ENCODE measurements at regions of chr3 and their contacts with region 1.

Region 1: GRCh38 chr3:4633078-4634004 is 140.2 kb downstream of the ITPR1 start:
- DNase-seq: no peak
- H3K4me3 Mint-ChIP-seq: no peak overlapping the region
- H3K27ac Mint-ChIP-seq: no peak overlapping the region
- H3K4me1 Mint-ChIP-seq: peaks cover 5% of the 10 kb centered on the region
- H3K27me3 Mint-ChIP-seq: no peaks in the 10 kb centered on the region

Region 2: DNA sequence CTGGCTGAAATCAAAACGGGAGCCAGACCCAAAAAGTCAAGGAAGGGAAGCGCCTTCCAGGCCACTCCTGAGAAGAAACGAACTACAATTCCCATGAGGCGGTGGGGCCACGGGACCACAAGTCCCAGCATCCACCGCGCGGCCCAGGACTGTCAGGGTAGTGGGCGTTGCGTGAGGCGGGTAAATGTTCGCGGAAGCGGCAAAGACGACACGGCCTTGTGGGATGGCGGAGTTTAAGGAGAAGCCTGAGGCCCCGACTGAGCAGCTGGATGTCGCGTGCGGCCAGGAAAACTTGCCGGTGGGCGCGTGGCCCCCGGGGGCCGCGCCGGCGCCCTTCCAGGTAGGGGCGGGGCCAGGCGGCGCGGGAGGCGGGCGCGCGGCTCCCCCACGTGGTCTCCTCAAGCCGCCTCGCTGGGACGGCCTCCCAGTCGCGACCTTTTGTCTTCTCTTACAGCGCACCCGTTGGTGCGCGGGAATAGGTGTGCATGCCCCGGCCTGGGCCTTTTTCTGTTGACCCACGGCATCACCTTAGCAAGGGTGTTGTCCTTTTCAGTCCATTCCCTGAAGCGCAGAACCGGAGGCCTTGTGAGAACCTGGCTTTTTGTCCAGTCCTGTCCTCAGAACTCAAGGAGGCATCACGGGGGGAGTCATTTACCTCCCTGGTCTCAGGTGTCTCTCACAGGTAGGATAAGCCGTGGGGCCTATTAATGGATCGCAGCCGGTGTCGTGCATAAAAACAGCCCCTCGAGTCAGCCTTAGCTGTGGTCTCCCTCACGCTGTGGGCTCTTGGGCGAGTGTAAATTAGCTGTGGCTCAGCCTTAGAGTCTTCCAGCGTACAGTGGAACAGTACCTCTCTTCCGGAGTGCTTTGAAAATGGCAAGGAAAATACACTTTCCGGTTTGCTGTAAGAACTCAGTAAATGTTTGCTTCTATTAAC is 329.9 kb before region 1 on chr3 and contains the start of gene SETMAR:
- CTCF ChIA-PET with region 1: interaction called, 6 read pairs
- POLR2A ChIA-PET with region 1: no interaction called
- intact Hi-C with region 1: loop called (anchors 5 kb)
- DNase-seq: peak; percentile 91
- H3K4me3 Mint-ChIP-seq: peak within 1 kb of the TSS; percentile 93
- H3K27ac Mint-ChIP-seq: peak within 1 kb of the TSS; percentile 96
- H3K4me1 Mint-ChIP-seq: peaks cover 23% of the 10 kb centered on the region
- H3K27me3 Mint-ChIP-seq: no peaks in the 10 kb centered on the region
- total RNA-seq, gene SETMAR: 11.7 to 13.8 TPM

Region 3: DNA sequence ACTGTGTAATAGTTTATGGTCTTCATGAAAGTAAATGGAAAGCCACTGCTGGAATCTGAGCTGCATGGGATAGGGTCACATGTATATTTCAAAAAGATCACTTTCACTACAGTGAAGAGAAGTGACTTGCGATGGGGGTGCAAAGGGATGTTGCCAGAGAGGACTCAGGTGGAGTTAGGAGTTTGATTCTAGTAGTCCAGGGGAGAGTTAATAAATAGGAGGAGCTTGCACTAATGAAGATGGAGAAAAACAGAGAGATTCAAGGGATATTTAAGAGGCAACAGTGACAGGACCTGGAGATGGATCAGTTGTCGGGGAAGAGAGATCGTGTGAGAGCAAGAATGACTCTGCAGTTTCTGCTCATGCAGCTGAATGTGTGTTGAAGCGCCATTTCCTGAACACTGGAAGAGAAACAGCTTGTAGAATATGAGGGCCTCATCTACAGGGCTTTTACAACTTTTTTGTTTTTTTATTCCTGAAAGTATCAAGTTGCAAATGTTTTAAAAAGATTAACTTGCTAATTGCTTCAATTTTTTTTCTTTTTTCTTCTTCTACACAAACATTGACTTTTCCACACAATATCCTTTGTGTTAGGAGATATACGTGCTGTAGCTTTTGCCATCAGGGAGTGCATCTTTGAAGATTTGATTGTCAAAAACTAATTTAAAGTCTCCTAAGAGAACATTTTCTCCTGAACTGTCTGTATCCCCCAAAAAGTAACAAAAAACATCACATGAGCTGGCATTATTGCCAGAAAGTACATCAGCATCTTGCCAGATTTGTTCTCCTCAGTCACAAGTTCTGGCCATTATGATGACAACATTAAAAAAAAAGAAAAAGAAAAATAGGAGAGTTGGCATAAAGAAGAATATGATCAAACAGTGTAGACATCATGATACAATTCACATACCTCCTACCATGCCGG is 292.7 kb before region 1 on chr3:
- CTCF ChIA-PET with region 1: interaction called, 14 read pairs
- POLR2A ChIA-PET with region 1: no interaction called
- intact Hi-C with region 1: no loop called
- DNase-seq: no peak
- H3K4me3 Mint-ChIP-seq: no peak overlapping the region
- H3K27ac Mint-ChIP-seq: no peak overlapping the region
- H3K4me1 Mint-ChIP-seq: no peaks in the 10 kb centered on the region
- H3K27me3 Mint-ChIP-seq: no peaks in the 10 kb centered on the region

Region 4: DNA sequence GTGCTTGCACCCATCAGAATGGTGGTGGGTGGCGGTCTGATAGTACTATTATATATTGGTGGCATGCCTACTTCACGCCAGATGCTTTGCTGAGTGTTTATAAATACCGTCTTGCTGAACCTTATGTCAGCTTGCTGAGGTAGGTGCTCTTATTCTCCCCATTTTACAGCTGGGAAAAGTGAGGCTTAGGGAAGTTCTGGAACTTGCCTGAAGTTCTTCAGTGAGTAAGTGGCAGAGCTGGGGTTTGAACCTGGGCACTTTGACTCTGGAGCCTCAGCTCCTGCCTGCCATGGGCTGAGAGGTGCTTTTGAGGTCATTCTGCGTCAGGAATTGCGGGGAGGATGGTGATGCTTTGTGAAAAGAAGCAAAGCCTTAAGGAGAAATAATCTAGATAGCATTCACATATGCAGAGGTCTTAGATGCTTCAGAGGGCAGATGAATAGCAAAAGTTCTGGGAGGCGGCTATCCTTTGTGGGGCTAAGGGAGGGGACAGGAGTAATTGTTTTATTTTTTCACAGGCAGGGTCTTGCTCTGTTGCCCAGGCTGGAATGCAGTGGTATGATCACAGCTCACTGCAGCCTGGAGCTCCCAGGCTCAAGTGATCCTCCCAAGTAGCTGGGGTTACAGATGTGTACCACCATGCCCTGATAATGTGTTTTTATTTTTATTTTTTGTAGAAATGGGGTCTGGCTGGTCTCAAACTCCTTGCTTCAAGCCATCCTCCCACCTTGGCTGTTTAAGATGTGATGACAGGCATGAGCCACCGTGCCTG is 121.7 kb before region 1 on chr3:
- CTCF ChIA-PET with region 1: interaction called, 13 read pairs
- POLR2A ChIA-PET with region 1: no interaction called
- intact Hi-C with region 1: no loop called
- DNase-seq: no peak
- H3K4me3 Mint-ChIP-seq: no peak overlapping the region
- H3K27ac Mint-ChIP-seq: no peak overlapping the region
- H3K4me1 Mint-ChIP-seq: peaks cover 18% of the 10 kb centered on the region
- H3K27me3 Mint-ChIP-seq: no peaks in the 10 kb centered on the region

Region 5: DNA sequence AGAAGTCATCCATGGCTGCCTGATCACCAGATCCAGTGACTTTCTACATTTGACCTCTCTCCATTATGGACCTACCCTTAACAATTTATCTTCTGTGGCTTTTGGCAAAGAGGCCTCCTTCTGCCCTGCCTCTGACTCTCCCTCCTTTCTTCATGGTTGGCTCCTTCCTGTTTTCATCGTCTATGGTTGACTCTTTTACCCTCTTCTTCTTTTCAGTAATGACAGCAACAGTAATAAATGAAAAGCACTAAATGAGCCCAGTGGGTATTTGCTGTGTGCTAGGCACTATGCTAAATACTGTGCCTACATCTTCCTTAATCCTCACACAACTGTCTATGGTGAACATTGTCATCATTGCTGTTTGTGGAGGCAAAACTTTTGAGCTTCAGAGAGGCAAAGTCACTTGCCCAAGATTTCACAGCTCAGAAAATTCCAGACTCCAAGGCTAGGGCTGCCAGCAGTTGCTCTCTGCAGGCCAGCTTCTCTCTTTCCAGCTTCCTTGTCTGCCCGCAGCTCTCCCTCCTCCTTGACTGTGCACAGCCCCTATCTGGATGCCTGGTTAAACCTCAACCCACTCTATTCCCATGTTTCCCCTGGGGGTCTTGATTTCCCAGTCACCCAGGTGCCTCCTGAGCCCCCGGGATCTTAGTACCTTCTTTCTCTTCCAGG is 115.6 kb before region 1 on chr3:
- CTCF ChIA-PET with region 1: interaction called, 49 read pairs
- POLR2A ChIA-PET with region 1: no interaction called
- intact Hi-C with region 1: loop called (anchors 1 kb)
- DNase-seq: no peak
- H3K4me3 Mint-ChIP-seq: no peak overlapping the region
- H3K27ac Mint-ChIP-seq: peak overlapping the region; percentile 69
- H3K4me1 Mint-ChIP-seq: peaks cover 28% of the 10 kb centered on the region
- H3K27me3 Mint-ChIP-seq: no peaks in the 10 kb centered on the region

Region 6: GRCh38 chr3:4524088-4525023 is 109.0 kb before region 1 on chr3:
- CTCF ChIA-PET with region 1: interaction called, 49 read pairs
- POLR2A ChIA-PET with region 1: no interaction called
- intact Hi-C with region 1: loop called (anchors 1 kb)
- DNase-seq: no peak
- H3K4me3 Mint-ChIP-seq: no peak overlapping the region
- H3K27ac Mint-ChIP-seq: no peak overlapping the region
- H3K4me1 Mint-ChIP-seq: peaks cover 5% of the 10 kb centered on the region
- H3K27me3 Mint-ChIP-seq: no peaks in the 10 kb centered on the region

Region 7: GRCh38 chr3:4584456-4585249 is 48.7 kb before region 1 on chr3:
- CTCF ChIA-PET with region 1: interaction called, 10 read pairs
- POLR2A ChIA-PET with region 1: no interaction called
- intact Hi-C with region 1: loop called (anchors 2 kb)
- DNase-seq: peak; percentile 48
- H3K4me3 Mint-ChIP-seq: peak overlapping the region; percentile 81
- H3K27ac Mint-ChIP-seq: peak overlapping the region; percentile 73
- H3K4me1 Mint-ChIP-seq: peaks cover 66% of the 10 kb centered on the region
- H3K27me3 Mint-ChIP-seq: no peaks in the 10 kb centered on the region

Region 8: DNA sequence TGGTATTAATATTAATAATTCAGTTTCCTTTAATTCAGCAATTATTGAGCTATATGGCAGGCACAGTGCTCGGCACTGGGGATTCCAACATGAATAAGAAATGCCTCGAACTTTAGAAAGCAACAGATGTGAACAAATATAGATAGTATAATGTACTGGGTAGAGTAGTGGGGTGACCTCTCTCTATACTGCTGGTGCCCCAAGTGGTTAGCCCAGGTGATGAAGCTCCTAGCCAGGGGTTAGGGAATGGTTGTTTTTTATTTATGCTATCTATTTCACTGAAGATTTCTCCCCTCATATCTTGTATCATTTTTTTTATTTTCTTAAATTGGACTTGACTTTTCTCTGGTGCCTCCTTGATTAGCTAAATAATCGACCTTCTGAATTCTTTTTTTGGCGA is 408.0 kb after region 1 on chr3:
- CTCF ChIA-PET with region 1: no interaction called
- POLR2A ChIA-PET with region 1: no interaction called
- intact Hi-C with region 1: no loop called
- DNase-seq: no peak
- H3K4me3 Mint-ChIP-seq: no peak overlapping the region
- H3K27ac Mint-ChIP-seq: no peak overlapping the region
- H3K4me1 Mint-ChIP-seq: peaks cover 19% of the 10 kb centered on the region
- H3K27me3 Mint-ChIP-seq: no peaks in the 10 kb centered on the region

Measured in activated CD4-positive, alpha-beta memory T cell treated with anti-CD3 and anti-CD28 coated beads for 36 hours (primary cell).